Dorsolateral prefrontal cortex (tissue), 120 donors: ENCODE measurements at regions of chr15 and their contacts with region 1.

Region 1: DNA sequence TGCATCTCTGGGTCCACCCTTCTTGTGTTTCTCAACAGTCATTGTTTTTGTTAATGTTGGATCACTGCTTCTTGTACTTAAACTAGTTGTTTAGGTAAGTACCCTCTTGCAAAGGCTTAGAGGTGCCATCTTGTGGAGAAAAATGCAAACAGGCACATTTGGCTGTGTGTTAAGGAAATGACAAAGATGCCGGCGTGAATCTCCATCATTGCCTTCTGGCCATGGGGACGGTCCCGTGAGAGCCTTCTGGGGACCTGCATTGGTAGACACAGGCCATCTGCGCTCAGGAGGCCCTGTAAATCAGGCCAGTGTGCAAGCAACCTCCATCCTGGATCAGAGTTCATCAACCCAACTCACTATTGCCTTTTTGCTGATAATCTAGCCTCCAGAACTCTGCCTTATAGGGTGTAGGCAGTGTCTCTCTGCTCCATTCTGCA is 158.6 kb upstream of the NR2E3 start:
- DNase-seq: peak in 1 of 10 donors; percentile 25
- H3K4me3 ChIP-seq: no peak overlapping the region
- H3K27ac ChIP-seq: peak overlapping the region in 48 of 59 donors; percentile 9 to 88 (median 60)
- H3K27me3 ChIP-seq: no peaks in the 10 kb centered on the region
- CTCF ChIP-seq: peak in 54 of 56 donors; percentile 22 to 70 (median 57)

Region 2: GRCh38 chr15:71448688-71449114 is 203.1 kb before region 1 on chr15:
- intact Hi-C with region 1: loop called (anchors 5 to 10 kb)
- DNase-seq: peak in 1 of 10 donors; percentile 53
- H3K4me3 ChIP-seq: no peak overlapping the region
- H3K27ac ChIP-seq: peak overlapping the region in 12 of 59 donors; percentile 1 to 46 (median 20)
- H3K27me3 ChIP-seq: no peaks in the 10 kb centered on the region
- CTCF ChIP-seq: peak; percentile 67 to 96 (median 88)

Region 3: DNA sequence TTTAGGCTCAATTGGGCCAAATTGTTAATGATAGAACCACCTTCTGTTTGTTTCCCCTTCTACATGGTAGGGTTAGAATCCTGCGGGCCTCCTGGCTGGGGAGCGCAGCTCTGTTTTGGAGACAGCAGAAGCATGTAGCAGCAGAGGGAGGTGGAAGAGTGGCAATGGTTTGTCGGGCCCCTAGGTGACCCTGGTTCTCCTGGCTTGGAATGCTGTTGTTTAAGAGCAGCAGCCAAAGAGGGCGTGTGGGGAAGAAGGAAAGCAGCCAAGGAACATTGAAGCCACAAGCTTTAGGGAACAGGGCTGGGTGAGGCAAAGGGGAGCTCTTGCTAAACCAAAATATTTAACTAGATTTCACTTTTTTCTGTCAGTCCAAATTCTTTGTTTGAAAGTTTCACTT is 55.1 kb before region 1 on chr15:
- intact Hi-C with region 1: loop called in 1 of 2 experiments (anchors 10 kb)
- DNase-seq: peak in 4 of 10 donors; percentile 27 to 39 (median 32)
- H3K4me3 ChIP-seq: no peak overlapping the region
- H3K27ac ChIP-seq: peak overlapping the region in 22 of 59 donors; percentile 6 to 70 (median 47)
- H3K27me3 ChIP-seq: peaks cover 0 to 5% (median 0%) of the 10 kb centered on the region in 45 donors
- CTCF ChIP-seq: no peak

Region 4: GRCh38 chr15:71730277-71731144 is 78.7 kb after region 1 on chr15:
- intact Hi-C with region 1: loop called in 1 of 2 experiments (anchors 2 kb)
- DNase-seq: peak in 2 of 10 donors; percentile 49 to 58
- H3K4me3 ChIP-seq: no peak overlapping the region
- H3K27ac ChIP-seq: no peak overlapping the region
- H3K27me3 ChIP-seq: peaks cover 0 to 7% (median 0%) of the 10 kb centered on the region in 45 donors
- CTCF ChIP-seq: peak; percentile 52 to 87 (median 75)